Activated CD4-positive, alpha-beta T cell treated with anti-CD3 and anti-CD28 coated beads, Interleukin-2, amount 10 ng/mL, durations not matched to agents 24 days and 14 days (primary cell): ENCODE measurements at regions of chr19 and their contacts with region 1.

Region 1: GRCh38 chr19:18058208-18059030 is 28.3 kb downstream of the IL12RB1 start:
- DNase-seq: peak; percentile 95
- H3K4me3 Mint-ChIP-seq: peak overlapping the region; percentile 51
- H3K27ac Mint-ChIP-seq: peak overlapping the region; percentile 75
- H3K4me1 Mint-ChIP-seq: peaks cover 13% of the 10 kb centered on the region
- H3K27me3 Mint-ChIP-seq: no peaks in the 10 kb centered on the region

Region 2: DNA sequence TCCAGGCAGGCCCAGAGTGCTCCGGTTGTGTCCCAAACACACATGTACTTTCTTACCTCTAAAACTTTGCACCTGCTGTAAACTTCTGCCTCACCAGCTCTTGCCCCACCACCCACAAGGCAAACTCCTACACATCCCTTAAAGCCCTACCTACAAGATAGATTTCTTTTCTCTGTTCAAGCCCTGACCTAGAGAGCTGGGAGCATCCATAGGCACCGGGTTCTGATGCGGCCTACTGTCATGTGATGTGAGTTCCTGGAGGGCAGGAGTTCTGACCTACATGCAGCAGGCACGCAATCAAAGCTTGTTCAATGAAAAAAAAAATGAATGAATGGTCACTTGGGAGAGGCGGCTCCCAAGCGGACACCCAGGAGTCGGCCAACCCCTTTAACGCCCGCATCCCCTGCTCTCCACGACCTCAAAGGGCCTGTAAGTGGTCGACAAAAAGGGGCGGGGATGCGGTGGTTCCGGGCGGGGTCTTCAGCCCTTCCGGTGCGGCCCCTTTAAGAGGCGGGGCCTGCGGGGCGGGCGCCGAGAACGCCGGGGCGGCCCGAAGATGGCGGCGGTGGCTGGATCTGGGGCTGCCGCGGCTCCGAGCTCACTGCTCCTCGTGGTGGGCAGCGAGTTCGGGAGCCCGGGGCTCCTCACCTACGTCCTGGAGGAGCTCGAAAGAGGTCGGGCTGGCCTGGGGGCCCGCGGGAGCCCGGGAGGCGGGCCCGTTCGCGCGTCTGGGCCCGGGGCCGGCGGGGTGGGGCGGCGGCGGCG is 339.3 kb before region 1 on chr19 and contains the start of gene MAP1S:
- intact Hi-C with region 1: no loop called
- DNase-seq: peak; percentile 93
- H3K4me3 Mint-ChIP-seq: peak within 1 kb of the TSS; percentile 91
- H3K27ac Mint-ChIP-seq: peak within 1 kb of the TSS; percentile 85
- H3K4me1 Mint-ChIP-seq: peaks cover 34% of the 10 kb centered on the region
- H3K27me3 Mint-ChIP-seq: no peaks in the 10 kb centered on the region
- total RNA-seq, gene MAP1S: 69.0 and 70.3 TPM in 2 replicates

Region 3: DNA sequence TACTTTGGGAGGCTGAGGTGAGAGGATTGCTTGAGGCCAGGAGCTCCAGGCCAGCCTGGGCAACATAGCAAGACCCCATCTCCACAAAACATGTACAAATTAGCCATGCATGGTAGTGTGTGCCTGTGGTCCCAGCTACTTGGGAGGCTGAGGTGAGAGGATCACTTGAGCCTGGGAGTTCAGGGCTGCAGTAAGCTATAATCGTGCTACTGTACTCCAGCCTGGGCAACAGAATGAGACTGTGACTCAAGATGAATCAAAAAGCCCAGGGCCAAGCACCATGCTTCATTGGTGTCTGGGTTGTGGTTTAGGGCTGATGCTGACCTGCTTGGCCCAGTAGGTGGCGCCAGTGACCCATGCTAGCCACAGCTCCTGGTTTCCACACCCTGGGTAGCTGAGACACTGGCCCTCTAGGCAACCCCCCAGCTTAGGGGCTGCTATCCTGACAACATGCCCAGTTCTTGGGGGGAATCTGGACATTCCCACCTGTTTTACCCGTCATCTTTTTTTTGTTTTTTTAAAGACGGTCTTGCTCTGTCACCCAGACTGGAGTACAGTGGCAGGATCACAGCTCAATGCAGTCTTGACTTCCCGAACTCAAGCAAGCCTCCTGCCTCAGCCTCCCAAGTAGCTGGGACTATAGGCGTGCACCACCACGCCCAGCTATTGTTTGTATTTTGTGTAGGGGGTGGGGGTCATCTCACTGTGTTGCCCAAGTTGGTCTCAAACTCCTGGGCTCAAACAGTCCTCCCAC is 120.2 kb before region 1 on chr19:
- intact Hi-C with region 1: loop called (anchors 2 kb)
- DNase-seq: peak; percentile 94
- H3K4me3 Mint-ChIP-seq: no peak overlapping the region
- H3K27ac Mint-ChIP-seq: no peak overlapping the region
- H3K4me1 Mint-ChIP-seq: peaks cover 5% of the 10 kb centered on the region
- H3K27me3 Mint-ChIP-seq: no peaks in the 10 kb centered on the region

Region 4: GRCh38 chr19:18007044-18007916 is 51.1 kb before region 1 on chr19:
- intact Hi-C with region 1: loop called (anchors 1 kb)
- DNase-seq: peak; percentile 96
- H3K4me3 Mint-ChIP-seq: peak overlapping the region; percentile 92
- H3K27ac Mint-ChIP-seq: peak overlapping the region; percentile 93
- H3K4me1 Mint-ChIP-seq: peaks cover 33% of the 10 kb centered on the region
- H3K27me3 Mint-ChIP-seq: no peaks in the 10 kb centered on the region

Region 5: GRCh38 chr19:18044825-18045304 is 13.6 kb before region 1 on chr19:
- intact Hi-C with region 1: loop called (anchors 2 kb)
- DNase-seq: peak; percentile 96
- H3K4me3 Mint-ChIP-seq: peak overlapping the region; percentile 79
- H3K27ac Mint-ChIP-seq: peak overlapping the region; percentile 93
- H3K4me1 Mint-ChIP-seq: peaks cover 38% of the 10 kb centered on the region
- H3K27me3 Mint-ChIP-seq: peaks cover 3% of the 10 kb centered on the region